Sigmoid colon (tissue), 7 donors: ENCODE measurements at regions of chr2 and their contacts with region 1.

Region 1: DNA sequence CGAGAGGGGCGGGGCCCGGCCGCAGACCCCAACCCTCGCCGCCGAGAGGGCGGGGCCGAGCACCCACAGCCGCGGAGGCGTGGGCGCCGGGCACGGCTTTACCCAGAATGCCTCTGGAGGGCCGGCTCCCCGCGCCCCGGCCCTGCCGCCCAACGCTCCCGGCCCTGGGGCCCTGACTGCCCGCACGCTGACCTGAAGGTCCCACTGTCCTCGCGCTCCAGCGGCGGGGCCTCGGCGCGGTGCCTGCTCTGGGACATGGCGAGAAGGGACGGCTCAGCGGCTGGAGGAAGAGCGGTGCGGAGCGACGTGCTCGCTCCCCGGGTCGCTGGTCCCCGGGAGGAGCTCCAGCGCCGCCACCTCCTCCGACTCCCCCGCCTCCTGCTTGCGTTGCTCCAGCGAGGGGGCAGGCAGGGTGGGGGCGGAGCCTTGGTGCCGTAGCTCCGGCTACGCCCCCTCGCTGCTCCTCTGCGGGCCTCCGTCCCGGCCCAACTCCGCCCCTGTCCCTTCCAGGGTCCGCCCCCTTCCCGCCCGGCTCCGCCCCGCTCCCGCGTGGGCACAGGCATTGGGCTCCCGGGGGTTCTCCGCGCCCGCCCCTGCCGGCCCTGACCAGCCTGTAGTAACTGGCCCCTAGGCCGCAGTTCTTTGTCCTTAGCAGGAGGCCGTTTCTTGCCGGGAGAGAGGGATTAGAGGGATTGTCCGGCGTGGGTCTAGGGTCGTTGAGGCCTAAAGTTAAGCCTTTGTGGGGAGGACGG is at the starts of genes PJVK and PRKRA:
- DNase-seq: peak; percentile 99
- H3K4me3 ChIP-seq: peak within 1 kb of the TSS; percentile 88 to 94 (median 93)
- H3K27ac ChIP-seq: peak within 1 kb of the TSS; percentile 97 to 98 (median 98)
- H3K4me1 ChIP-seq: peaks cover 0 to 39% (median 33%) of the 10 kb centered on the region in 4 donors
- H3K27me3 ChIP-seq: no peaks in the 10 kb centered on the region
- CTCF ChIP-seq: no peak
- EP300 ChIP-seq: peak in 2 of 4 donors; percentile 29 to 36
- POLR2A ChIP-seq: peak; percentile 81 to 87
- total RNA-seq, gene PJVK: 2.9 to 8.3 (median 4.6) TPM
- total RNA-seq, gene PRKRA: 62.6 to 86.1 (median 76.7) TPM

Region 2: DNA sequence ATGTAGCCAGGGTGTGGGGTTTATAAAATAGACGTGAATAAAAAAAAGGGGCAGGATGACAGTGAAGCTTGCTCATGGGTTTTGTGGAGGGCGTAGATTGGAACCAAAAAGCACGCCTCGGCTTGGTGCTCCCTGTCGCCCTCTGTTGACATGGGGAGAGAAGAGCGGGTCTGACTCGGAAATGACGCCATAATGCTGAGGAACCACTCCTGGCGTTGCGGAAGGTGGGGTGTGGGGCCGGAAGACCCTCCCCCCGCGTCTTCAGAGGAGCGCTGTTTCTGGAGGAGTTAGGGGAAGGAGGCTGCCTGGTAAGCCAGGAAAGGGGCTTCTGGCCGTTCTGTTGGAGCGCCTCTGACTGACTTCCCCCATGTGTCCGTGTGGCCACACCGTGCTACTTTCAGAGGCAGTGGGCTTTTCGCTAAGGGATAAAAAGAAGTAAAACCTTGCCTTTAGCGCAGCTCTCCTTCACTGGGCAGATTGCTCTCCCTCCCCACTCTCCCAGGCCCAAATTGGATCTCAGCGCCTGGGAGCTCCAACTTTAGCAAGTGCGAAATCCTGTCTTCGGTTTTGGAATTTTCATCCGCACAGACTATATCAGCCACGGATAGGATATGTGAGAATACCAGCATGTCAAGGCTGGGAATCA is 72.1 kb after region 1 on chr2:
- intact Hi-C with region 1: loop called (anchors 2 kb)
- DNase-seq: peak; percentile 91
- H3K4me3 ChIP-seq: peak overlapping the region; percentile 42 to 61 (median 57)
- H3K27ac ChIP-seq: peak overlapping the region; percentile 71 to 80 (median 76)
- H3K4me1 ChIP-seq: peaks cover 0 to 12% (median 3%) of the 10 kb centered on the region in 4 donors
- H3K27me3 ChIP-seq: no peaks in the 10 kb centered on the region
- CTCF ChIP-seq: peak; percentile 44 to 73 (median 49)
- EP300 ChIP-seq: no peak
- POLR2A ChIP-seq: peak in 1 of 2 donors; percentile 14